MCF 10A (cell line): ENCODE measurements at regions of chr4 and their contacts with region 1.

Region 1: GRCh38 chr4:71553605-71554004 is 214.8 kb downstream of the SLC4A4 start:
- DNase-seq: peak; percentile 41
- H3K4me3 Mint-ChIP-seq: no peak overlapping the region
- H3K27ac Mint-ChIP-seq: no peak overlapping the region
- H3K4me1 Mint-ChIP-seq: no peaks in the 10 kb centered on the region
- H3K27me3 Mint-ChIP-seq: no peaks in the 10 kb centered on the region
- CTCF ChIP-seq: peak; percentile 51

Region 2: DNA sequence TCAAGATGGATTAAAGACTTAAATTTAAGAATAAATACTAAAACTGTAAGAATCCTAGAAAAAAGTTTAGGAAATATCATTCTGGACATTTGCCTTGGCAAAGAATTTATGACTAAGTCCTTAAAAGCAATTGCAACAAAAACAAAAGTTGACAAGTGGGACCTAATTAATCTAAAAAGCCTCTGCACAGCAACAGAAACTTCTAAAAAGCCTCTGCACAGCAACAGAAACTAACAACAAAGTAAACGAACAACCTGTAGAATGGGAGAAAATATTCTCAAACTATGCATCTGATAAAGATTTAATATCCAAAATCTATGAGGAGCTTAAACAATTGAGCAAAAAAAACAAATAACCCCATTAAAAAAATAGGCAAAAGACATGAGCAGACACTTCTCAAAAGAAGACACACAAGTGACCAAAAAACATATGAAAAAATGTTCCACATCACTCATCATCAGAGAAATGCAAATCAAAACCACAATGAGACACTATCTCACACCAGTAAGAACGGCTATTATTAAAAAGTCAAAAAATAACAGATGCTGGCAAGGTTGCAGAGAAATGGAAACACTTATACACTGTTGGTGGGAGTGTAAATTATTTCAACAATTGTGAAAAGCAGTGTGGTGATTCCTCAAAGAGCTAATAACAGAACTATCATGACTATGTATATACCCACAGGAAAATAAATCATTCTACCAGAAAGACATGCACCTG is 1161.4 kb before region 1 on chr4:
- CTCF ChIA-PET with region 1: no interaction called
- POLR2A ChIA-PET with region 1: no interaction called
- intact Hi-C with region 1: no loop called
- DNase-seq: no peak
- H3K4me3 Mint-ChIP-seq: no peak overlapping the region
- H3K27ac Mint-ChIP-seq: no peak overlapping the region
- H3K4me1 Mint-ChIP-seq: no peaks in the 10 kb centered on the region
- H3K27me3 Mint-ChIP-seq: no peaks in the 10 kb centered on the region
- CTCF ChIP-seq: no peak

Region 3: DNA sequence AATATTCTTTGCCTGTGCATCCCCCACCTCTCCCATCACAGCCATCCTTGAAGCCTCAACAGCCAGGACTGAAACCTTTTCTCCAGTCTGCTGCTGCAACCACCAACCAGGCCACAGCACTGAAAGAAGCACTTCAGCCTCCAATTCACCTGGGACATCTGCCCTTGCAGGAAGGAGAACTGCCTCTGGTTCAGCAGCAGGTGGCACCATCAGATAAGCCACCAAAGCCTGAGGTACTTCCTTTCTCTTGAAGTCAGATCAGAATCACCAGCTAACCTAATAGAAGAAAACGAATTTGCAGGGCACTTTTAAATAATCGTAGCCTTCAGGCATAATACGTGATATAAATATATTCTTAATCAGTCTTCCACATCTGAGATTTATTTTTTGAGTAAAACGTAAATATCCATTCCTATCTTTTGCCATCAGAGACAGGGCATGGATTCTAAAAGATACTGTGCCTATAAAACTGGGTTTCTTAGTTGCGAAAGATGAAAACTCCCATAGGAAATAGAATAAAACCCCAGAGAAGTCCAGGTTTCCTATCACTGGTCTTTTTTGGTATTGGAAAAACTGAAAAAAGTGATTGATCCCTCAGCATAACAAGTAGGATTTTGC is 952.1 kb before region 1 on chr4:
- CTCF ChIA-PET with region 1: no interaction called
- POLR2A ChIA-PET with region 1: no interaction called
- intact Hi-C with region 1: loop called (anchors 5 kb)
- DNase-seq: peak; percentile 76
- H3K4me3 Mint-ChIP-seq: no peak overlapping the region
- H3K27ac Mint-ChIP-seq: no peak overlapping the region
- H3K4me1 Mint-ChIP-seq: no peaks in the 10 kb centered on the region
- H3K27me3 Mint-ChIP-seq: no peaks in the 10 kb centered on the region
- CTCF ChIP-seq: peak; percentile 72

Region 4: GRCh38 chr4:71184195-71184781 is 369.3 kb before region 1 on chr4:
- CTCF ChIA-PET with region 1: interaction called, 38 read pairs
- POLR2A ChIA-PET with region 1: no interaction called
- intact Hi-C with region 1: loop called (anchors 2 kb)
- DNase-seq: peak; percentile 68
- H3K4me3 Mint-ChIP-seq: no peak overlapping the region
- H3K27ac Mint-ChIP-seq: no peak overlapping the region
- H3K4me1 Mint-ChIP-seq: no peaks in the 10 kb centered on the region
- H3K27me3 Mint-ChIP-seq: peaks cover 25% of the 10 kb centered on the region
- CTCF ChIP-seq: peak; percentile 56

Region 5: GRCh38 chr4:71441186-71442169 is 112.1 kb before region 1 on chr4:
- CTCF ChIA-PET with region 1: no interaction called
- POLR2A ChIA-PET with region 1: no interaction called
- intact Hi-C with region 1: no loop called
- DNase-seq: peak; percentile 41
- H3K4me3 Mint-ChIP-seq: no peak overlapping the region
- H3K27ac Mint-ChIP-seq: no peak overlapping the region
- H3K4me1 Mint-ChIP-seq: no peaks in the 10 kb centered on the region
- H3K27me3 Mint-ChIP-seq: no peaks in the 10 kb centered on the region
- CTCF ChIP-seq: no peak

Region 6: GRCh38 chr4:71564775-71565174 is 11.2 kb after region 1 on chr4:
- CTCF ChIA-PET with region 1: interaction called, 11 read pairs
- POLR2A ChIA-PET with region 1: no interaction called
- intact Hi-C with region 1: no loop called
- DNase-seq: no peak
- H3K4me3 Mint-ChIP-seq: no peak overlapping the region
- H3K27ac Mint-ChIP-seq: no peak overlapping the region
- H3K4me1 Mint-ChIP-seq: no peaks in the 10 kb centered on the region
- H3K27me3 Mint-ChIP-seq: no peaks in the 10 kb centered on the region
- CTCF ChIP-seq: no peak